B cell (primary cell): ENCODE measurements at regions of chr21 and their contacts with region 1.

Region 1: DNA sequence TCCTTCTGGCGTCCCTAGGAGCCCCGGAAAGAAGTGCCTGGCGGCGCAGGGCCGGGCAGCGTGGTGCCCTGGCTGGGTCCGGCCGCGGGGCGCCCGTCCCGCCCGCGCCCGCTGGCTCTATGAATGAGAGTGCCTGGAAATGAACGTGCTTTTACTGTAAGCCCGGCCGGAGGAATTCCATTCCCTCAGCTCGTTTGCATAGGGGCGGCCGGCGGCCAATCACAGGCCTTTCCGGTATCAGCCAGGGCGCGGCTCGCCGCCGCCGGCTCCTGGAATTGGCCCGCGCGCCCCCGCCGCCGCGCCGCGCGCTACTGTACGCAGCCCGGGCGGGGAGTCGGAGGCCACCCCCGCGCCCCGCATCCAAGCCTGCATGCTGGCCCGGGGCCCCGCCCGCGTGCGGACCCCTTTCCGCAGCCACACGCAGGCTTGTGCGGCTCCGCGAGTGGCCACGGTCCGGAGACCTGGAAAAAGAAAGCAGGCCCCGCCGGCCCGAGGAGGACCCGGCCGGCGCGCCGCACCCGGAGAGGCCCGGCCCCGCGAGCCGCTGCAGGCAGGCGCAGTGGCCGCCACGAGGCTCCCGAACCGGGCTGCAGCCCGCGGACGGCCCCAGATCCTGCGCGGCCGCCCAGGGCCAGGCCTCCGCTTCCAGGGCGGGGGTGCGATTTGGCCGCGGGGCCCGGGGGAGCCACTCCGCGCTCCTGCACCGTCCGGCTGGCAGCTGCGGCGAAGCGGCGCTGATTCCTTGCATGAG is 160.4 kb downstream of the RUNX1 start:
- DNase-seq: peak; percentile 79
- ATAC-seq: peak; percentile 44
- H3K4me3 ChIP-seq: peak overlapping the region; percentile 32 to 80 (median 62)
- H3K4me3 Mint-ChIP-seq: peak overlapping the region; percentile 94
- H3K27ac ChIP-seq: peak overlapping the region; percentile 50 to 82
- H3K27ac Mint-ChIP-seq: peak overlapping the region; percentile 93
- H3K4me1 ChIP-seq: peaks cover 49 to 58% of the 10 kb centered on the region in 2 donors
- H3K4me1 Mint-ChIP-seq: peaks cover 49% of the 10 kb centered on the region
- H3K27me3 ChIP-seq: peaks cover 0 to 13% (median 2%) of the 10 kb centered on the region in 4 experiments
- H3K27me3 Mint-ChIP-seq: no peaks in the 10 kb centered on the region
- CTCF ChIP-seq: no peak

Region 2: GRCh38 chr21:34745557-34746255 is 143.0 kb before region 1 on chr21:
- CTCF ChIA-PET with region 1: interaction called, 34 read pairs
- POLR2A ChIA-PET with region 1: no interaction called
- intact Hi-C with region 1: loop called (anchors 1 kb)
- DNase-seq: peak; percentile 76
- ATAC-seq: peak; percentile 89
- H3K4me3 ChIP-seq: peak overlapping the region in 3 of 5 experiments; percentile 14 to 41 (median 27)
- H3K4me3 Mint-ChIP-seq: peak overlapping the region; percentile 81
- H3K27ac ChIP-seq: no peak overlapping the region
- H3K27ac Mint-ChIP-seq: no peak overlapping the region
- H3K4me1 ChIP-seq: peaks cover 0 to 8% of the 10 kb centered on the region in 2 donors
- H3K4me1 Mint-ChIP-seq: peaks cover 4% of the 10 kb centered on the region
- H3K27me3 ChIP-seq: no peaks in the 10 kb centered on the region
- H3K27me3 Mint-ChIP-seq: peaks cover 25% of the 10 kb centered on the region
- CTCF ChIP-seq: peak; percentile 85

Region 3: DNA sequence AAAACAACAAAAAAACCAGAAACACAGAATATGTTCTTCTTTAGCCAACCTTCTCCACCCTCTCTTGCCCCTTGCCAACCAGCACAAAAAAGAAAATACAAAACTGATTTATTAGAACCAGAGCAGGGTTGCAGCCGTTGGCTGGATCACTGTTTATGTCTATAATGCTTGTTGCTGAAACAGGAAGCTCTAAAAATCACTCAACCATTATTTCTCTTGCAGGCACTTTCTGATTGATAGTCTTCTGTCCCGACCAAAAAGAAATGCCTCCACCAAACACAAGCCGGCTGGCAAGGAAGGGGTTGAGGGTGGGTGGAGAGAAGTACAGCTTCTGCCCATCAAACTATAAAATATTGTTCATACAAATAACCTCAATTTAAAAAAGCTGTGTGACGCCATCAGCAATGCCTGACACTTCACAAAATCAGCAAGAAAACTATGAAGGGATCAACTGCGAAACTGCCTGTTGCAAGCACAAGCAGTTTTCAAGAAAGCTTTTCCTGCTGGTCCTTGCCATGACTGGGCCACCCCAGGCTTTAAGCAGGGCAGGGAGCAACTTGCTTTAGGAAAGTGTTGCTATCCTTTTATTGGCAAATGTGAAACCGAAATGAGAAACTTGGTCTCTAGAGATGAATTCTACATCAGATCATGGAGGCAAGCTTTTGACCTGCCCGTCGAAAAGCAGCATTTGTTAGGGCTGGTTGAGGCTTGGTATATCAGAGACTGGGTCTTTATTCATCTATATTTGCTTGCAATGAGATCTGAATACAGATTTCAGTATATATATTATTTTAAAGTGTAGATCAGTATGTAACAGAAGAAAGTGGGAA is 13.8 kb before region 1 on chr21:
- CTCF ChIA-PET with region 1: interaction called, 17 read pairs
- POLR2A ChIA-PET with region 1: interaction called, 5 read pairs
- intact Hi-C with region 1: loop called (anchors 1 kb)
- DNase-seq: peak; percentile 56
- ATAC-seq: peak; percentile 87
- H3K4me3 ChIP-seq: peak overlapping the region in 4 of 5 experiments; percentile 4 to 54 (median 18)
- H3K4me3 Mint-ChIP-seq: peak overlapping the region; percentile 56
- H3K27ac ChIP-seq: peak overlapping the region; percentile 26 to 53
- H3K27ac Mint-ChIP-seq: peak overlapping the region; percentile 43
- H3K4me1 ChIP-seq: peaks cover 22 to 24% of the 10 kb centered on the region in 2 donors
- H3K4me1 Mint-ChIP-seq: peaks cover 28% of the 10 kb centered on the region
- H3K27me3 ChIP-seq: no peaks in the 10 kb centered on the region
- H3K27me3 Mint-ChIP-seq: no peaks in the 10 kb centered on the region
- CTCF ChIP-seq: no peak

Region 4: DNA sequence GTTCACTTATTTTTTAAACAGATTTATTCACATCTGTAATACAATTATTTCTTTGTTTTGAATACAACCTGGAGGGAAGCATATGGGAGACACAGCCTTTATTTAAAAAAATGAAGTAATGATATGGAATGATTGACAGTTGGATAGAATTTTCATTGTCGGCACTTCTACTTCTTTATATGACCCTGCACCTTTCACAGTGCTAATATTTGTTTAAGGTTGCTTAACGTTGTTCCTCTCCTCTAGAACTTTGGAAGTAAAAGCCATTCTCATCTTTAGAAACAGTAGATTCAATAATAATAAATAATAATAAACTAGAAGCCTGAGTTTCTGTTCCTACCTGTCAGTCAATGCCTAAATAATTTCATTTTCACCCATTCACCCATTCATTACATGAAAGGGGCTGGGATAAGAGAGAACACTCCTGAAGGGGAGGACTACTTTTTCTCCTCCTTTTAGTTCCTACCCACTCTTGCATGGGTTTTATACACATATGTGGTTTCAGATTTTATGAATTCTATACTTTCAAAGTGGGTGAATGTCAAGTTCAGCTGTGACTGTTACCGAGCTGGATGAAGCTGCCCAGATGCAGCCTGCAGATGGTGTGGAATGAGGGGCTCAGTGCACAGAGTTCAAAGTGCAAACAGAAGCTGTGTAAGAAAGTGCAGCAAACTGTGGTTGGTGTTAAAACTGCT is 151.0 kb after region 1 on chr21:
- CTCF ChIA-PET with region 1: interaction called, 131 read pairs
- POLR2A ChIA-PET with region 1: interaction called, 3 read pairs
- intact Hi-C with region 1: no loop called
- DNase-seq: no peak
- ATAC-seq: no peak
- H3K4me3 ChIP-seq: no peak overlapping the region
- H3K4me3 Mint-ChIP-seq: peak overlapping the region; percentile 68
- H3K27ac ChIP-seq: no peak overlapping the region
- H3K27ac Mint-ChIP-seq: no peak overlapping the region
- H3K4me1 ChIP-seq: peaks cover 49 to 61% of the 10 kb centered on the region in 2 donors
- H3K4me1 Mint-ChIP-seq: peaks cover 68% of the 10 kb centered on the region
- H3K27me3 ChIP-seq: no peaks in the 10 kb centered on the region
- H3K27me3 Mint-ChIP-seq: no peaks in the 10 kb centered on the region
- CTCF ChIP-seq: no peak

Region 5: DNA sequence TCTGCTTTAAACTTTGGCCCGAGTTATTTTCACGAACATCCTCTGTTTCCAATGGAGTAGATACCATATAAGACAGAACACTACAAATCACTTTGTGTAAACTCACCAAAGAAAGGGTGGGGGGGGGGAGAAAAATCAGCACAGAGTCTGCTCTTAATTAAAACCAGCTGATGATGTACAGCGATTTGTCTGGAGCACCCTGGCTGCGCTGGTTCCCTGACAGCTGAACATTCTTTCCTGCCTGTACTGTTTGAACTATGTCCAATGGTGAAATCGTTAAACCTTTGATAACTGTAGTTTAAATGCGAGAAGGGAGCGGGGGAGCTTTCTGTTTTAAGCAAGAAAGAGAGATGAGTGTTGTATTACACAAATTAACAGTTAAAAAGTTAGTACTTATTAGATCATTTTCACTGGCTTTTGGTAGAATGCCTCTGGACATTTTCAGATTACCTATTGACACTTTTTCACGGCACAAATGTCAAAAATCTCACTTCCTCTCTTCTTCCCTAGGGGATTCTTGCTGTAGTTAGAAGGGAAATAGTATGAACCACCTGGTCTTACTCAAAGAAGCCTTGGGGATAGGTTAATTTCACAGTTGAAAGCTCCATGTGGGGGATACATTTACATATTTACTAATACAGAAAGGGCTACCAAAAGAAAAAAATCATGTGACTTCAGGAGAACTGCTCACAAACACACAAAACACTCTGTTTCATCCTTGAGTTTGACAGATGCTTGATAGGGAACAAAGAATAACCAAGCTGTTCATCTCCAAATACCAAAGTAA is 300.5 kb after region 1 on chr21:
- CTCF ChIA-PET with region 1: interaction called, 3 read pairs
- POLR2A ChIA-PET with region 1: interaction called, 5 read pairs
- intact Hi-C with region 1: loop called (anchors 5 kb)
- DNase-seq: peak; percentile 81
- ATAC-seq: peak; percentile 95
- H3K4me3 ChIP-seq: peak overlapping the region in 1 of 5 experiments; percentile 36
- H3K4me3 Mint-ChIP-seq: peak overlapping the region; percentile 73
- H3K27ac ChIP-seq: no peak overlapping the region
- H3K27ac Mint-ChIP-seq: peak overlapping the region; percentile 54
- H3K4me1 ChIP-seq: peaks cover 18 to 19% of the 10 kb centered on the region in 2 donors
- H3K4me1 Mint-ChIP-seq: peaks cover 27% of the 10 kb centered on the region
- H3K27me3 ChIP-seq: no peaks in the 10 kb centered on the region
- H3K27me3 Mint-ChIP-seq: no peaks in the 10 kb centered on the region
- CTCF ChIP-seq: no peak

Region 6: GRCh38 chr21:35491920-35492678 is 603.4 kb after region 1 on chr21:
- CTCF ChIA-PET with region 1: no interaction called
- POLR2A ChIA-PET with region 1: no interaction called
- intact Hi-C with region 1: no loop called
- DNase-seq: no peak
- ATAC-seq: no peak
- H3K4me3 ChIP-seq: no peak overlapping the region
- H3K4me3 Mint-ChIP-seq: no peak overlapping the region
- H3K27ac ChIP-seq: no peak overlapping the region
- H3K27ac Mint-ChIP-seq: no peak overlapping the region
- H3K4me1 ChIP-seq: no peaks in the 10 kb centered on the region
- H3K4me1 Mint-ChIP-seq: no peaks in the 10 kb centered on the region
- H3K27me3 ChIP-seq: no peaks in the 10 kb centered on the region
- H3K27me3 Mint-ChIP-seq: peaks cover 6% of the 10 kb centered on the region
- CTCF ChIP-seq: no peak

Region 7: DNA sequence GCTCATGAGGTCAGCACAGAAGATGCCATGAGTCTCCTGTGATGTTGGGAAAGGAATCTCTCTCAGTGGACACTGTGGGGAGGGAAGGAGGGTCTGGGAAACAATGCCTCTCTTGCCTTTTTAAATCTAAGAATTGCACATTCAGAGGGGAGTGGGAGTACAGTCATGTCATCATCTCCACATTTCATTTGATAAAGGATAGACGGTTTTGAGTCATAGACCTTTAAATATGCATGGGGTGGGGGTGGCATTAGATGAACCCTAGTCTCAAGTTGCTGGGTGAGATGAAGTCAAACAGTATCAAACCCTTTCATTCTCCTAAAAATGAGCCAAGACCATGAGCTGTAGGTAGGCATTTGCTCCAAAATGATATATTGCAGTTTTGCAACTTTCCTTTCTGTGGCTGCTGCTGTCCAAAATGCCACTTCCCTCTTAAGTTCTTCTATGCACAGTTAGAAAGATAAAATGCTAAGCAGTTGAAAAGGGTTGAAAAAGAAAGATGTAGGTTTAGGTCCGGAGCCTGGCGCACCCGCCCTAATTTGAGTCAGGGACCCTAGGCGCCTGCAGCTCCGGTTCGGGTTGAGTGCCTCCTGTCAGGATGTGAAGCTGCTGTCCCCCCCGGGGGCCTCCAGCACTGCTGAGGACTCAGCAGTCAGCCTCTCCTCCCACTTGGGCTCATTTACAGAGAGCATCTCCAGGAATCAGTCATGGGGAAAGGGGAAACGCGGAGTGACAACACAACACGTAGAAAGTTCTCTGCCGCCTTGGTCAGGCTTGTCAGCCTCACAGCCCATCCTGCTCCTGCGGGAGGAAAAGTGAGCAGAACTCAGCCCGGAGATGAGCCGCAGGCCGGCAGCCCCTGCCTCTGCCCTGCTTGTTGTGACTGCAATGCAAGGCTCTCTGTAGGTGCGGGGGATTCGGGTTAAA is 639.6 kb after region 1 on chr21:
- CTCF ChIA-PET with region 1: interaction called, 3 read pairs
- POLR2A ChIA-PET with region 1: no interaction called
- intact Hi-C with region 1: loop called (anchors 10 kb)
- DNase-seq: peak; percentile 57
- ATAC-seq: peak; percentile 68
- H3K4me3 ChIP-seq: peak overlapping the region; percentile 50 to 74 (median 67)
- H3K4me3 Mint-ChIP-seq: peak overlapping the region; percentile 91
- H3K27ac ChIP-seq: peak overlapping the region; percentile 81
- H3K27ac Mint-ChIP-seq: peak overlapping the region; percentile 93
- H3K4me1 ChIP-seq: peaks cover 43 to 45% of the 10 kb centered on the region in 2 donors
- H3K4me1 Mint-ChIP-seq: peaks cover 54% of the 10 kb centered on the region
- H3K27me3 ChIP-seq: no peaks in the 10 kb centered on the region
- H3K27me3 Mint-ChIP-seq: no peaks in the 10 kb centered on the region
- CTCF ChIP-seq: no peak

Region 8: DNA sequence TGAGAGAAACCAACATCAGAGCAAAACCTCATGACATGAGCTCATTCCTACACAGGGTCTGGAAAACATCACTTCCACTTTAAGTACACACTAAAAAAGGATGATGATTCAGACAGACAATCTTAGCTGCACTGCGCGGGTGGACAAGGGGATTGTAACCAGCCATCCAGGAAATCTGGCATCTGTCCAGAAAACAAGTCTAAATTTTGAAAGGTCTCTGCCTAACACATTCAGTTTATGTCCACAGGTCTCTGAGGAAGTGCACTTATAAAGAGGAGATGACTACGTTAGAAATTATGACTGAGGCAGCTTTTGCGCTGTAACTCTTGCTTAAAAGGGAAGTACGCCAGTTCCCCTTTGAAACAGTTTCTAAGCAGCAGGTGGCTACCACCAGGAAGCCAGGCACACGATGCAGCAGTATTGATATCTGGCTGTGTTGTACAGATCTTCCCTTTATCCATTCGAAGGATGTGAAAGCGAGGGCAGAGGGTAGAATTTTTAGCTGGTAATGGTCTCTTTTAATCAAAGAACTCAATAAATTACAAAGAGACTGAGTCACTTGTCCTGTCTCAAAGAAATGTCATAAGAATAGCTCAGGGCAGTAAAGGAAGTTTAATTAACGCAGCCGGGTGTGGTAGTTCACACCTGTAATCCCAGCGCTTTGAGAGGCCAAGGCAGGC is 1043.6 kb after region 1 on chr21:
- CTCF ChIA-PET with region 1: interaction called, 3 read pairs
- POLR2A ChIA-PET with region 1: no interaction called
- intact Hi-C with region 1: loop called (anchors 10 kb)
- DNase-seq: peak; percentile 85
- ATAC-seq: peak; percentile 91
- H3K4me3 ChIP-seq: no peak overlapping the region
- H3K4me3 Mint-ChIP-seq: no peak overlapping the region
- H3K27ac ChIP-seq: peak overlapping the region; percentile 24 to 49
- H3K27ac Mint-ChIP-seq: no peak overlapping the region
- H3K4me1 ChIP-seq: peaks cover 14 to 17% of the 10 kb centered on the region in 2 donors
- H3K4me1 Mint-ChIP-seq: no peaks in the 10 kb centered on the region
- H3K27me3 ChIP-seq: no peaks in the 10 kb centered on the region
- H3K27me3 Mint-ChIP-seq: peaks cover 1% of the 10 kb centered on the region
- CTCF ChIP-seq: no peak